CD14-positive monocyte (primary cell): ENCODE measurements at regions of chr18 and their contacts with region 1.

Region 1: DNA sequence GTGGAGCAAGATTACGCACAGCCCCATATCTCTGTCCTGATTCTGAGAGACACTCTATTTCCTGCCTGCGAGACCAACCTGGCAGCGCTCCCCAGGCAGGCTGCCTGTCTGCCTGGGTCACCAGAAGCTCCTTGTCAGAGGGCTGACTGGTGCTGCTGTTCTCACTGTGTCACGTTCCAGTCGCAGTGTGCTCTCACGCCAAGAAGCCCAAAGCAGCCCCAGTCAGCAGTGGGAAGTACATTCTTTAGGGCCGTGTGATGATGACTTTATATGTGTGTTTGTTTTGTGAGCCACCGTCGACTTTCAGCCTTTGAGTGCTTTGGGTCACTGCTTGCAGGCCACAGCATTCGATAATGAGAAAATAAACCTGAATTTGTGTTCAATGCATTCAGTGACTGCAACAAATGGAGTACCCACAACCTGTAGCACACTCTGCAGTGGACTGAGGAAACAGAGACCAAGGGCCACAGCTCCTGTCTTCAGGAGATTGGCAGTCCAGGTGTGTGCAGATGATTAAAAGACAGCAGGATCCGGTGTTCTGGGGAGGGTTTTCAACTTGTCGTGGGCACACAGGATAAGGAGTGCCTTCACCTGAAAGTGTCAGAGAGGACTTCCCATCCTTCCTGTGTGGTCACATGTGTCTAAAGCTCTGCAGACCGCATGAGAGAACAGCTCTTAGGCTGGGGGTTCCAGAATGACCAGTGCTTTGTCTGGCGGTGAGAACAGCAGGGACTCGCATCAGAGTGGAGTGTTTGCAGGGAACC is 4.8 kb downstream of the TNFRSF11A start:
- DNase-seq: peak; percentile 37 to 71 (median 45)
- H3K4me3 ChIP-seq: no peak overlapping the region
- H3K4me3 Mint-ChIP-seq: peak overlapping the region; percentile 45 to 79
- H3K27ac ChIP-seq: no peak overlapping the region
- H3K27ac Mint-ChIP-seq: no peak overlapping the region
- H3K4me1 ChIP-seq: peaks cover 60 to 69% of the 10 kb centered on the region in 2 donors
- H3K4me1 Mint-ChIP-seq: peaks cover 66% of the 10 kb centered on the region
- H3K27me3 ChIP-seq: peaks cover 23 to 55% of the 10 kb centered on the region in 2 donors
- H3K27me3 Mint-ChIP-seq: peaks cover 54 to 70% (median 57%) of the 10 kb centered on the region in 3 donors
- CTCF ChIP-seq: no peak

Region 2: GRCh38 chr18:62287781-62288664 is 41.9 kb before region 1 on chr18:
- intact Hi-C with region 1: no loop called
- DNase-seq: peak in 2 of 3 donors; percentile 5 to 18
- H3K4me3 ChIP-seq: peak overlapping the region in 1 of 3 experiments; percentile 51
- H3K4me3 Mint-ChIP-seq: no peak overlapping the region
- H3K27ac ChIP-seq: peak overlapping the region in 1 of 2 donors; percentile 72
- H3K27ac Mint-ChIP-seq: peak overlapping the region; percentile 58 to 92 (median 79)
- H3K4me1 ChIP-seq: peaks cover 20 to 38% of the 10 kb centered on the region in 2 donors
- H3K4me1 Mint-ChIP-seq: peaks cover 38% of the 10 kb centered on the region
- H3K27me3 ChIP-seq: no peaks in the 10 kb centered on the region
- H3K27me3 Mint-ChIP-seq: peaks cover 0 to 3% (median 0%) of the 10 kb centered on the region in 3 donors
- CTCF ChIP-seq: no peak

Region 3: GRCh38 chr18:62368100-62368499 is 38.2 kb after region 1 on chr18:
- intact Hi-C with region 1: no loop called
- DNase-seq: no peak
- H3K4me3 ChIP-seq: no peak overlapping the region
- H3K4me3 Mint-ChIP-seq: no peak overlapping the region
- H3K27ac ChIP-seq: no peak overlapping the region
- H3K27ac Mint-ChIP-seq: no peak overlapping the region
- H3K4me1 ChIP-seq: no peaks in the 10 kb centered on the region
- H3K4me1 Mint-ChIP-seq: no peaks in the 10 kb centered on the region
- H3K27me3 ChIP-seq: no peaks in the 10 kb centered on the region
- H3K27me3 Mint-ChIP-seq: peaks cover 0 to 5% (median 2%) of the 10 kb centered on the region in 3 donors
- CTCF ChIP-seq: no peak

Region 4: DNA sequence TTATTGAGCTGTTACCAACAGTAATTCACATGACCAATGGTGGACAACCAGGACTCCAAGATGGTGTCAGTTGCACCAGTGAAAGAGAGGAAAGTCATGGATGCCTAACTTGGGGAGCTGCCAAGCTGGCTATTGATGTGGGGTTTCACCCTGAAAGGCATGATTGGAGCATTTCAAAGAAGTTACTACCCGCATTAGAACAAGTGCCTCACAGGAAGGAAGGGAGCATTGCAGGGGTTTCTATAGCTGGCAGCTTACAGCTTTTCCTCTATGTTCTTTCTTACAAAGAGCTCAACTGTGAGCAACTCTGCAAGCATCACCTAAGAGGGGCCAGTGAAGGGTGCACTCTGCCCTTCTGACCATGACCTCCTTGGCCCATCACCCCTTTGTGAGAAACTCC is 88.4 kb after region 1 on chr18:
- intact Hi-C with region 1: loop called in 1 of 2 experiments (anchors 10 kb)
- DNase-seq: no peak
- H3K4me3 ChIP-seq: no peak overlapping the region
- H3K4me3 Mint-ChIP-seq: no peak overlapping the region
- H3K27ac ChIP-seq: no peak overlapping the region
- H3K27ac Mint-ChIP-seq: no peak overlapping the region
- H3K4me1 ChIP-seq: peaks cover 16 to 24% of the 10 kb centered on the region in 2 donors
- H3K4me1 Mint-ChIP-seq: peaks cover 31% of the 10 kb centered on the region
- H3K27me3 ChIP-seq: no peaks in the 10 kb centered on the region
- H3K27me3 Mint-ChIP-seq: peaks cover 0 to 3% (median 1%) of the 10 kb centered on the region in 3 donors
- CTCF ChIP-seq: no peak